ENCODE measurements at regions of chr10 and their contacts with region 1.

Region 1: GRCh38 chr10:33143160-33143728 is 185.2 kb upstream of the ITGB1 start:
- DNase-seq: peak; percentile 79
- H3K4me3 Mint-ChIP-seq: peak overlapping the region; percentile 8
- H3K27ac Mint-ChIP-seq: peak overlapping the region; percentile 80
- H3K4me1 Mint-ChIP-seq: peaks cover 41% of the 10 kb centered on the region
- H3K27me3 Mint-ChIP-seq: peaks cover 2% of the 10 kb centered on the region

Region 2: DNA sequence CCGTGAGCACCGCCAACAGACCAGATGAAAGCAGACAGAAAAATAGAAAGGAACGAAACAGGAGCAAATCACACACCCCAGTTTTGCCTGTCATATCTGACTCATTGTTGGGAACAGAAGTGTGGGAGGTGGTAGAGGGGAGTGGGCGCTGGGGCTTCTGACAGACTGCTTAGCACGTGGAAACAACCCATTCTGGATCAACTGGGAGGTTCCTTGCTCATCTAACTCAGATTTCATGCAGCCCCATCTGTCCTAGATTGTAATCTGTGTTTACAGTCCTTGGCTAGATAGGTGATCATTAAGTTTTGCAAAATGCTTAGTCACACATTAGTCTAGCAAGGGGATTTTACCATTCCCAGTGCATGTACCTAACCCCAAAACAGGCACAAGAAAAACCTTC is 37.1 kb after region 1 on chr10:
- intact Hi-C with region 1: loop called (anchors 1 kb)
- DNase-seq: no peak
- H3K4me3 Mint-ChIP-seq: no peak overlapping the region
- H3K27ac Mint-ChIP-seq: no peak overlapping the region
- H3K4me1 Mint-ChIP-seq: peaks cover 8% of the 10 kb centered on the region
- H3K27me3 Mint-ChIP-seq: peaks cover 16% of the 10 kb centered on the region